OCI-LY7 (cell line): ENCODE measurements at regions of chr1 and their contacts with region 1.

Region 1: GRCh38 chr1:87292684-87293493 is 35.8 kb upstream of the LMO4 start:
- DNase-seq: peak; percentile 78
- H3K4me3 ChIP-seq: no peak overlapping the region
- H3K27ac ChIP-seq: no peak overlapping the region
- H3K4me1 ChIP-seq: no peaks in the 10 kb centered on the region
- CTCF ChIP-seq: peak; percentile 97

Region 2: GRCh38 chr1:87131809-87132283 is 161.0 kb before region 1 on chr1:
- CTCF ChIA-PET with region 1: no interaction called
- POLR2A ChIA-PET with region 1: no interaction called
- intact Hi-C with region 1: loop called (anchors 5 kb)
- DNase-seq: peak; percentile 83
- H3K4me3 ChIP-seq: peak overlapping the region; percentile 64
- H3K27ac ChIP-seq: no peak overlapping the region
- H3K4me1 ChIP-seq: peaks cover 5% of the 10 kb centered on the region
- CTCF ChIP-seq: peak; percentile 93

Region 3: DNA sequence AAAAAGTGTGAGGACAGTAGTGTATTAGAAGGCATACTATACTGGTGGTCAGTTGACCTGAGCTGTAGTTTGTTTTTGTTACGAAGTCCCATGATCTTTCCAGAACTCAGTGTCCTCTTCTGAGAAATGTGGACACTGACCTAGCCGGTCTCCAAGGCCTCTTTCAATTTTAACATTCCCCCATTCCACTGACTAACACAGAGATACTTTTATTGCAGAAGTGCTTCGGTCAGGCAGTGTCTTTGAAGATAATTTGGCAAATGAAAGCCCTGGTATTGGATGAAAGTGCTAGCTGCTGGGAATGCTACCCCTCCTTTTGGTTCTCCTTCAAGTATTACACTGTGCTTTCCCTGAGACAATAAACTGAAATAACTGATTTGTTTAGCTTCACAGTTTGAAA is 125.2 kb after region 1 on chr1:
- CTCF ChIA-PET with region 1: no interaction called
- POLR2A ChIA-PET with region 1: no interaction called
- intact Hi-C with region 1: no loop called
- DNase-seq: no peak
- H3K4me3 ChIP-seq: no peak overlapping the region
- H3K27ac ChIP-seq: no peak overlapping the region
- H3K4me1 ChIP-seq: no peaks in the 10 kb centered on the region
- CTCF ChIP-seq: no peak

Region 4: GRCh38 chr1:87615491-87615890 is 322.6 kb after region 1 on chr1:
- CTCF ChIA-PET with region 1: no interaction called
- POLR2A ChIA-PET with region 1: no interaction called
- intact Hi-C with region 1: no loop called
- DNase-seq: no peak
- H3K4me3 ChIP-seq: no peak overlapping the region
- H3K27ac ChIP-seq: no peak overlapping the region
- H3K4me1 ChIP-seq: no peaks in the 10 kb centered on the region
- CTCF ChIP-seq: no peak

Region 5: DNA sequence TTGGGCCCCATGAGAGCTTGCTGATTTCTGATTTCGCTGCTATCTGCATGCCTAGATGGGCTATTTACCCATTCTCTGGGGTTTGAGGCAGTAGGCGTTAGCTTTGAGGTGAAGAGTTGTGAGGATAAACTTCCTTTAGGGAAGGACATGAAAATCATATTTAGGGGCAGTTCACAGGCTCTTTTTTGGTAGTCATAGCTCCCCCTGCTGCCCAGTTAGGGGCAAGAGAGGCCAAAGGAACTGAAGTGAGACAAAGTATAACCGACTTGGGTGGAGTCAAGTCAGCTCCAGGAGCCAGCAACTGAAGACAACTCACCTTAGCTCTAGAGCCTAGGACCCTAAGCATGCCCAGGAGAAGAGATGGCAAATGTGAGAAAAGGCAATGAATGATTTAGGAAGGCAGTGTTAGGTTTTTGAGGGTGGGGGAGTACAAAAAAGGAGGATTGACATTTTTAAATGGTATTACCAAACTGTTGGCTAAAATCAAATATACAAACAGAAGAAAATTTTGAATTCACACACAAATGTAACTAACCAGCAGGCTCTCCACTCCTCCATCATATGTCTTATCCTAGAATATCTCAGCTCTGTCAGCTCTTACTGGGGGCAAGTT is 660.9 kb after region 1 on chr1:
- CTCF ChIA-PET with region 1: no interaction called
- POLR2A ChIA-PET with region 1: no interaction called
- intact Hi-C with region 1: loop called (anchors 5 kb)
- DNase-seq: peak; percentile 57
- H3K4me3 ChIP-seq: no peak overlapping the region
- H3K27ac ChIP-seq: no peak overlapping the region
- H3K4me1 ChIP-seq: no peaks in the 10 kb centered on the region
- CTCF ChIP-seq: peak; percentile 90

Region 6: GRCh38 chr1:88061492-88062177 is 768.7 kb after region 1 on chr1:
- CTCF ChIA-PET with region 1: no interaction called
- POLR2A ChIA-PET with region 1: no interaction called
- intact Hi-C with region 1: loop called (anchors 1 kb)
- DNase-seq: peak; percentile 19
- H3K4me3 ChIP-seq: no peak overlapping the region
- H3K27ac ChIP-seq: no peak overlapping the region
- H3K4me1 ChIP-seq: no peaks in the 10 kb centered on the region
- CTCF ChIP-seq: peak; percentile 70